Cardiac septum (tissue), 1 donor: ENCODE measurements at regions of chr2 and their contacts with region 1.

Region 1: GRCh38 chr2:38740851-38741731 is 10.1 kb downstream of the SRSF7 start:
- DNase-seq: no peak

Region 2: DNA sequence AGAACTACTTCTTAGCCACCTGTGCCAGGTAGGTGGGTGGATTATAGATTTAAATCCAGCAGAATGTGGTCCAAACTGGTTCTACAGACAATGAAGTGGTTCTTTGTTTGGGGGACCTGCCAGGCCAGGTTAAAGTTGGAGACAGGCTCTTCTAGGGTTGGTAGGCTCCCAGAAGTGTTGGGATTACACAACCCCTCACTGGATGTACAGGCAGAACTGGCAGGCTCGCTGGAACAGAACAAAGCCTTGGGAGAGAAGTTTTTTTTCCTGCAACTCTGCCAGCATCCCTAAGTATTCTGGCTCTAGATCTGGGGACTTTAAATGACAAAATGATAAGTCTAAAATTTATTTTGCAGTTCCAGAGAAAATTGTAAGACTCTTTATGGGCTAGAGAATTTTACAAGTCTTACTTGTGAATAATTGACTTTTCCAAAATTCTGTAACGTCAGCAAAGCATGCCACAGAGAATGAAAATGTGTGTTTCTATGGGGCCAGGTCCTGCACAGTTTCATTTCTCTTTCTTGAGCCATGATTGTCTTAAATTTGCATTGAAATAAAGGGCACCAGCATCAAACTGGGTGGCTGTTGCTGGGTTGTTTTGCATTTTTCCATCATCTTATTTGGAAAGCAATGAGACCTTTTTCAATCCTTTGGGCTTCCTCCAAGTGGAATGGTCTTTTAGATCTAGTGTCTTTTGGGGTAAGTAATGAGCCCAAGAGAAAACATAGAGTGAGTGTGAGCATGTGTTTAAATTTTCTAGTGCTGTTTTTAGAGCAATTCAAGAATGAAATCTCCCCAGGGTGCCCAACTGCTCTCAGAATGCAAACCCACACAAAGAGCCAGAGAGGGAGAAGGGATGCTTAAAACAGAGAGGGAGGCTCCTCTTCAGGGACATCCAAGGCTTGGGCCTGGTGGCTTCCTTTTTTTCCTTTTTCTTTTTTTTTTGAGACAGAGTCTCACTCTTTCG is 331.7 kb before region 1 on chr2:
- intact Hi-C with region 1: no loop called
- DNase-seq: no peak

Region 3: GRCh38 chr2:38535744-38536506 is 205.2 kb before region 1 on chr2:
- intact Hi-C with region 1: loop called (anchors 5 kb)
- DNase-seq: peak; percentile 92

Region 4: DNA sequence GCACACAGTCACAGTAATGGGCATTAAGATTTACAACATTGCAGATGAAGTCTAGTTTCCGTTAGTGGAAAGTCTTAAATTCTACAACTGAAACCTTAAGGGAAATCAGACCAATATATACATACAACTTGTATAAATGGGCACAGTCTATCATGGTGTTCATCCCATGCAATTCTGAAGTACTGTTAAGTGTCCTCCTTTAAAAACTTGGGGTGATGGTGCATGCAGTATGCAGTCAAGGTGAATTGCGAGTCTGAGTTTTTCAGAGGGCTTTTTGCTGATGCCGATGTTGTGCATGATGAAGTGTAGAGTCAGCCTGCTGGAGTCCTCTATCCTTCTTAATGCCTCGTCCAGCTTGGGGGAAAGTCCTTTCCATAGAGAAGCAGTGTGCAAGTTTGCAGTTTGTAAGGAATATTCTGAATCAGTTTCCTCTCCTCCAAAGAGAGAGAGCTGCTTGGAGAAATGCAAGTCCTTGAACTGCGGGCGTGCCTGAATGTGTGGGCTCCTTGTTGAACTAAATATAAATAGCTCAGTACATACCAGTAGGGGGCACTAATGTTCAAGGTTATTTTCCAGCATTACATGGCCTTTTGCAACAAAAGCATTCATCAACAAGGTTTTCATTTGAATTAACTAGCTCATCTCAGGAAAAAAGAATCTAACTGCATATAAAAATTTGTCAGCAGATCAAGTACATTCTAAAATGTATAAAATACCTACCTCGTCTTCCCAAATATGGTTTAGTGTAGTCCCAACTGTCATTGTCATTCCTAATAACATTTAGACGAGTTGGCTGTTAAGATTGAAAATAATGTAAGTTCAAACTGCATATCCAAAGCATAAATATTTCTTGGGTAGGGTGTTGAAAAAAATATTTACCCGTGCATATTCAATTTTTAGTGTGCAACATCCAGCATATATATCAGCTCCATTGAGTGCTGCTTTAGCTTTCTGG is 159.6 kb before region 1 on chr2:
- intact Hi-C with region 1: loop called (anchors 5 kb)
- DNase-seq: no peak

Region 5: GRCh38 chr2:38728694-38729093 is 12.4 kb before region 1 on chr2:
- intact Hi-C with region 1: loop called (anchors 2 kb)
- DNase-seq: no peak

Region 6: GRCh38 chr2:38797276-38797675 is 56.2 kb after region 1 on chr2:
- intact Hi-C with region 1: no loop called
- DNase-seq: no peak

Region 7: GRCh38 chr2:38907743-38908562 is 166.9 kb after region 1 on chr2:
- intact Hi-C with region 1: no loop called
- DNase-seq: no peak